ENCODE measurements at regions of chr12 and their contacts with region 1.

Region 1: DNA sequence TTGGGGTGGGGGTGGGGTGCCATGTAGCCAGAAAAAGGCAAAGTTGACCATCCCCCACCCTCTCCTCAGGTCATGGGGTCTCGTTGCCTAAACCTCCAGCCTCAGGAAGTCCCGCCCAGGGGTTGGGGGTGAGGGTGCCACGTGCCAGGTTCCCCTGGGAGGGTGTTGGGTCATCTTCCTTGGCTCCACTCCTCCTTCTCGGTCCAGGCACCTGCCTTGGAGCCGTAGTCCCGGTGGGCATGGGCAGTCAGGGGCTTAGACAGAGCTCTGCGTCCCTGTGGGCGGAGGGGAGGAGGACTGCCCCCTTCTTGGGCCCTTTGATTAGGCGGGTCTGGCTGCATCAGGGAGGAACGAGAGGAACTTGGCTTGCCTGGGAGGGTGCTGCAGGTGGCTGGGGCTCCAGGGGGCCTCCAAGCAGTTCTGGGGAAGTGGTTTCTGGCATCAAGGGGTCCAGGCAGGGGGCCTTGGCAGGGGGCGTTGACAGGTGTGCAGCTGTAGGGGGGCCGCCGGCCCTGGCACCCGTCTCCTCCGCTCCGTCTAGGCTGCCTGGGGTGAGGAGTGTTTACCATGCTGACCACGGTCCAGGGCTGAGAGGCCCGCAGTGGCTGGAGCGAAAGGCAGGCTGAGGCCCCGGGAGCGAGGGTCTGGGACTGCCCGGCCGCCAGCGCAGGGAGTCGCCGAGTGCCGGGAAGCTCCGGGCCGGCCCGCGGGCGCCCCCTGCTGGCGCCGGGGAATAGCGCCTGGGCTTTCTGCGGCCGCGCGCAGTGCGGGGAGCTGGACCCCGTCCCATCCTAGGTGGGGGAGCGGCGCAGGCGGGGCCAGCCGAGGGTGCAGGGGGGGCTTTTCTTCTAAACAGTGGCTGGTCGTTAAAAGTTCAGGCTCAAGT is 7.9 kb downstream of the SETD1B start:
- DNase-seq: peak; percentile 82
- ATAC-seq: peak; percentile 86
- H3K4me3 Mint-ChIP-seq: peak overlapping the region; percentile 73
- H3K27ac Mint-ChIP-seq: peak overlapping the region; percentile 69
- H3K4me1 Mint-ChIP-seq: peaks cover 40% of the 10 kb centered on the region
- H3K27me3 Mint-ChIP-seq: no peaks in the 10 kb centered on the region

Region 2: DNA sequence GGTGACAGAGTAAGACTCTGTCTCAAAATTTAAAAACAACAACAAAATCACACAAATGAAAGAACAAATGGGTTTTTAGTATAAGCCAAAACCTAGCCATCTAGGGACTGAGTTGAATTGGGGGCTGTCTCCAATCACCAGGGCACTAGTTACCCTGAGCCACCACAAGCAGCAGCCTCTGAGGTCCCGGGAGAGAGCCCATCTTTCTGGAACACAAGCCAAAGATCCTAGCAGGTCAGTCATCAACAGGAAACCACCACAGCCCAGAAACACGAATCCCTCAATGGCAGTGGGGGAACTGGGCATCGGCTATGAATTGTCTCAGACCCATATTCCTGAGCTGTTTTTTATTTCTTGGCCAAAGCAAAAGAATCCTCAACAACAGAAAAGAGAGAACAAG is 306.2 kb before region 1 on chr12:
- CTCF ChIA-PET with region 1: no interaction called
- POLR2A ChIA-PET with region 1: no interaction called
- intact Hi-C with region 1: no loop called
- DNase-seq: no peak
- ATAC-seq: no peak
- H3K4me3 Mint-ChIP-seq: no peak overlapping the region
- H3K27ac Mint-ChIP-seq: peak overlapping the region; percentile 5
- H3K4me1 Mint-ChIP-seq: peaks cover 8% of the 10 kb centered on the region
- H3K27me3 Mint-ChIP-seq: no peaks in the 10 kb centered on the region

Region 3: DNA sequence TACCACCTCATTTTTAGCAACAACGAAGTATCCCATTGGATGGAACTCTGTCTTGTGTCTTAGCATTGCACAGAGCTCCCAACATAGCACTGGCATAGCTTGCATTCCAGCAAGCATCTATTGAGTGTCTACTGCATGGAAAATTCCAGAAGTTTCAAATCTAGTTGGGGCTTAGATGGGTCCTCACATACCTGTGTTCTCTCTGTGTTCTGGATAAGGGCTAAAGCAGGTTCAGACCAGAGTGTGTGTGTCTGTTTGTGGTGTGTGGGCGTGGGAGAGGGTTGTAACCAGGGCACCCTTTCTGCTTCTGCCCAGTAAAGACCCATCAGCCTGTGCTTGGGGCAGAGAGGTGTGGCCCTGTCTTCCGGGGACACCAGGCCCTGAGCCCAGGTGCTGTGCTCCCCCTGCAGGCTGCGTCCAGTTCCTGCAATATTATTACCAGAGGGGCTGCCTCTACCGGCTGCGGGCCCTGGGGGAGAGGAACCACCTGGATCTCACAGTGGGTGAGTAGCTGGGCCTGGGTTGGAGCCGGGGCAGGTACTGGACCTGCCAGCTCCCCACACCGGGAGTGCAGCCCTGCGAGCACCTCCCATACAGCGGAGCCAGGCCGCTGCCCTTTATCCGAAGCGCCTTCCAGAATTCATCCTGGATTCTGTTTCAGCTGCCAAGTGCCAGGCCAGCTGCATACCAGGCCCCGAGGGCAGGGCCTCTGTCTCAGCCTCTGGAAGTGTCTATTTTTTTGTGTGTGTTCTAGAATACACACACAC is 38.5 kb before region 1 on chr12:
- CTCF ChIA-PET with region 1: interaction called, 16 read pairs
- POLR2A ChIA-PET with region 1: no interaction called
- intact Hi-C with region 1: loop called (anchors 1 to 5 kb)
- DNase-seq: peak; percentile 90
- ATAC-seq: peak; percentile 83
- H3K4me3 Mint-ChIP-seq: no peak overlapping the region
- H3K27ac Mint-ChIP-seq: peak overlapping the region; percentile 81
- H3K4me1 Mint-ChIP-seq: peaks cover 11% of the 10 kb centered on the region
- H3K27me3 Mint-ChIP-seq: no peaks in the 10 kb centered on the region

Region 4: DNA sequence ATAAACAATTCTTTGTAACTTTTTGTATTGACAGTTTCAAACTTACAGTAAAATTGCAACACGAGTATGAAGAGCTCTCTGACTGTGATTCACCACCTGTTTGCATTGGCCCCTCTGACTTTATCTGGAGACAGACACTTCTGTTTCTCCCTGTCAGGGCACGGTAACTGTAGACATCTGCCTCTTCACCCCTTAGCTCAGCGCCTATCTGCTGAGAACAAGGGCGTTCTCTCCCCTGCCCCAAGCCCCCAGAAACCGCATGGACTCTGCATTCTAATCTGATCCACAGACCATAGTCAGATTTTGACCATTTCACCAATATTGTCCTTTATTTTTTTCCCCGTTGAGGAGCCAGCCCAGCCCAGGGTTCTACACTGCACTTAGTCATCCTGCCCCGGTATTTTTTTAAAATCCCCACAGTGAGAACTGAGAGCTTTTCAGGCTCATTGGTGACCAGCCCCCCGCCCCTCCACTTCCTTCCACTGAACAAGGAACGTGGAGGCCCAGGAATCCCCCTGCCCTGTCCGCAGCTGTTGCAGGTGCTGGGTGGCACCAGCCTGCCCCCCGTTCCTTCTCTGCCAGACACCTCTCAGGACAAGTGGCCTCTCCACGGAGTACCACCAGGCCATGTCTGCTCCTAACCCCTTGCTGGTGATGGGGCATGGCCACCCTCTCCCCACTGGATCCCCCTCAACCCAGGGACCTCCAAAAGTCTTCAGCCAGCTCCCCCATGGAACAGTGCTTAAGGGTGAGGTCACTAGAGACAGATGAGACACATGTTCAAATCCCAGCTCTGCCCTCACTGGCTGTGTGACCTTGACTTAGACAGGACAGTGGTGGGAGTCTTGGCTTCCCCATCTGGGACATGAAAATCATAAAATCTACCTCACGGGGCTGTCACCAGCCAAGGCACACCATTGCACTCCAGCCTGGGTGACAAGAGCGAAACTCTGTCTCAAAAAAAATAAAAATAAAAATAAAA is 29.4 kb before region 1 on chr12:
- CTCF ChIA-PET with region 1: interaction called, 24 read pairs
- POLR2A ChIA-PET with region 1: interaction called, 7 read pairs
- intact Hi-C with region 1: loop called in 1 of 2 experiments (anchors 5 kb)
- DNase-seq: peak; percentile 85
- ATAC-seq: peak; percentile 77
- H3K4me3 Mint-ChIP-seq: peak overlapping the region; percentile 68
- H3K27ac Mint-ChIP-seq: peak overlapping the region; percentile 96
- H3K4me1 Mint-ChIP-seq: peaks cover 74% of the 10 kb centered on the region
- H3K27me3 Mint-ChIP-seq: no peaks in the 10 kb centered on the region

Region 5: GRCh38 chr12:121839106-121839992 is 27.7 kb after region 1 on chr12:
- CTCF ChIA-PET with region 1: interaction called, 4 read pairs
- POLR2A ChIA-PET with region 1: no interaction called
- intact Hi-C with region 1: loop called in 1 of 2 experiments (anchors 1 kb)
- DNase-seq: peak; percentile 100
- ATAC-seq: peak; percentile 94
- H3K4me3 Mint-ChIP-seq: peak overlapping the region; percentile 91
- H3K27ac Mint-ChIP-seq: peak overlapping the region; percentile 91
- H3K4me1 Mint-ChIP-seq: peaks cover 14% of the 10 kb centered on the region
- H3K27me3 Mint-ChIP-seq: no peaks in the 10 kb centered on the region

Region 6: DNA sequence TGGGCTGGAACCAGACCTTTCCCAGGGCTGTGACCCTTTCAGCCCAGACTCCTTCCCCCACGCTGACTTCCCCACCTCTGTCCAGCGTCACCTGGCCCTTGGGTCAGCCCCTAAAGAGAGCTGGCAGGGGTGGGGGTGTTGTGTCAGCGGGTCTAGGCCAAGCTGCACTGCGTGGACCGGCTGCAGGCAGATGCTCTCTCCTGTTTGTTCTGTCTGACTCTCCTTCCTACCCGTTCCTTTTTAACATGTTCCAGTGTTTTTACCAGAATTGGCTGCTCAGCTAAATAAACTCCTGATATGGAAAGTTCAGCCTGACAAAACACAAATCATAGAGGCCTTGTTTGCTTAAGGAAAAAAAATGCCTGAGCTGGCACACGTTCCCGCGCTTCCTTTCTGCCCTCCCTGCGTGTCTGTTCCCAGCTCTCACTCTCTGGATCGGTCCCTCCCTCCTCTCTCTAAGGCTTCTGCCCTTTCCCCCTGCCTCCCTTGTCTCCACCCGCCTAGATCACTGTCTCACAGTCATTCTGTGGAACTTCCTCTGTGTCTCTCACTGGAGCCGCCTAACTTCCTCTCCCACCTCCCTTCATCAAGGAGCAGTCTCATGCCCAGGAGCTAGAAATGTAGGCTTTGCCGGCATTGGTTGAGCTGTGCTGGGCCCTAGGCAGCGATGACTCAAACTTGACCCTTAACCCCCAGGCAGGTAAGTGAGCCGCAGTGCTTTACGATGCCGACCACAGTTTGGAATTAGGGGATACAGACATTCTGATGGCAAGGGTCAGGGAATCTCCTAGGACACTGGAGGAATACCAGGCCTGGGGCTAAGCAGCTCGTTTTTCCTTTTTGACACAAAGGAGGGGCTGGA is 251.4 kb after region 1 on chr12:
- CTCF ChIA-PET with region 1: no interaction called
- POLR2A ChIA-PET with region 1: no interaction called
- intact Hi-C with region 1: no loop called
- DNase-seq: no peak
- ATAC-seq: no peak
- H3K4me3 Mint-ChIP-seq: no peak overlapping the region
- H3K27ac Mint-ChIP-seq: no peak overlapping the region
- H3K4me1 Mint-ChIP-seq: peaks cover 10% of the 10 kb centered on the region
- H3K27me3 Mint-ChIP-seq: no peaks in the 10 kb centered on the region

Region 7: DNA sequence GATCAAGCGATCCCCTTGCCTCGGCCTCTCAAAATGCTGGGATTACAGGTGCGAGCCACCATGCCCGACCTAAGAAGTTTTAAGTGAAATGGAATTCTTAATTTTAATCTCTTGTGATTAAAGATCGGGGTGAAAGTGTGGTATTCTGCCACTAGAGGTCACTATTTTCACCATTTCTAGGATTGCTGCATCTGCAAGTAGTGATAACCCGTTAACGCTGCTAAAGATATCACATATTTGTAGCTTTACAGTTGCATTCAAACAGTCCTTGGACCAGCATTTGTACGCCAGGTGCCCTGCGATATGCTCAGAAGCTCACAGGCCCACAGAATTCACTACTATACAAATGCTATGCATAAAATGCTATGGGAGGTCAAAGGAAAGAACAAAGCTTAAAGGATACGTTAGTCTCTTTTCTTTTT is 982.0 kb after region 1 on chr12:
- CTCF ChIA-PET with region 1: no interaction called
- POLR2A ChIA-PET with region 1: no interaction called
- intact Hi-C with region 1: no loop called
- DNase-seq: no peak
- ATAC-seq: peak; percentile 76
- H3K4me3 Mint-ChIP-seq: no peak overlapping the region
- H3K27ac Mint-ChIP-seq: no peak overlapping the region
- H3K4me1 Mint-ChIP-seq: no peaks in the 10 kb centered on the region
- H3K27me3 Mint-ChIP-seq: no peaks in the 10 kb centered on the region